PC-3 (cell line): ENCODE measurements at regions of chr15 and their contacts with region 1.

Region 1: DNA sequence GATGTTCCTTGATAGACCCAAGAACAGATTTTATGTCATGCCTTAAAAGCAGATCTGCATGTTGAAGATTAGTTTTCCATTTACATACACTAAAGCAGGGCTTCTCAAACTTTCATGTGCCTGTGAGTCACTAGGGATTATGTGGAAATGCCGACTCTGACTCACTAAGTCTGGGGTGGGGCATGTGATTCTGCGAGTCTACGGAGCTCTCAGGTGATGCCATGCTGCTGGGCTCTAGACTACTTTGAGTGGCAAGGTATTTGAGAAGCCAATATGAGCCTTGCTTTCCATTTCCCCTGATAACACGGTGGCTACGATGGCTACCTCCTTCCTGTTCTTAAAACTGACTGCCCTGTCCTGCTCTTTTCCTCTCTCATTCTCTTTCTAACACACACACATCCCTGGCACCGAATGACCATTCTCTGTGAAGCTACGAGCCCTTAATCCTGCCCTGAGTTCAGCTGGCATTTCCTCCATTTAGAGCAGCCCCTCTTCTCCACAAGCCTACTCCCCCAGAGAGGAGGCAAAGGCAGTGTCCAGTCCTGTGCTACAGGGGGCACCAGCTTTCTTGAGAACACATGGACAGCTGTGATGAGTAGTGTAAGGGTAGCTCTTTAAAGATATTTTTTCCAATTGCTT is 39.7 kb upstream of the PYGO1 start:
- DNase-seq: peak; percentile 91
- ATAC-seq: peak; percentile 100
- H3K4me3 ChIP-seq: no peak overlapping the region
- H3K27ac ChIP-seq: peak overlapping the region; percentile 52
- H3K4me1 ChIP-seq: peaks cover 7% of the 10 kb centered on the region; the same call in 1 of the 2 replicates
- H3K27me3 ChIP-seq: no peaks in the 10 kb centered on the region
- CTCF ChIP-seq: no peak

Region 2: DNA sequence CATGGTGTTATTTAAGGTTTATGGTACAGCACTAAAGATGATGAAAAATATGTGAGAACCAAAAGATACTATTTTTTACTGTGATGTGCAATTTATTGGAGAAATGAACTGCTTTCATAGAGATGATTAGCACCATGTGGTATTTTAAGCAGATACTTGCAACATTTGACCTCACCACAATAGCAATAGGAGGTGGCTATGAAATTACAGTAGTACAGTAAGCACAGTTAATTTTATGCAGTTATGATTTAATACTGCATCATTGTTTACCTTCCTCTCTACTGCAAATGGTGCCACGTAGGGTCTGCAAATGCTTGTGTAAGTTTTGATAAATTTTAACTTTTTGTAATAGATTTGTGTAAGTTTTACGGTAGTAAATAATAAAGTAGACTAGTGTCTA is 53.8 kb before region 1 on chr15:
- CTCF ChIA-PET with region 1: no interaction called
- POLR2A ChIA-PET with region 1: interaction called, 13 read pairs
- intact Hi-C with region 1: no loop called
- DNase-seq: peak; percentile 45
- ATAC-seq: peak; percentile 95
- H3K4me3 ChIP-seq: no peak overlapping the region
- H3K27ac ChIP-seq: peak overlapping the region; percentile 70
- H3K4me1 ChIP-seq: peaks cover 13% of the 10 kb centered on the region
- H3K27me3 ChIP-seq: no peaks in the 10 kb centered on the region
- CTCF ChIP-seq: no peak

Region 3: GRCh38 chr15:55588070-55588814 is 39.6 kb before region 1 on chr15 and contains the start of gene PYGO1:
- CTCF ChIA-PET with region 1: no interaction called
- POLR2A ChIA-PET with region 1: no interaction called
- intact Hi-C with region 1: loop called (anchors 5 kb)
- DNase-seq: peak; percentile 22
- ATAC-seq: peak; percentile 78
- H3K4me3 ChIP-seq: peak within 1 kb of the TSS; percentile 70
- H3K27ac ChIP-seq: no peak within 1 kb of the TSS
- H3K4me1 ChIP-seq: no peaks in the 10 kb centered on the region
- H3K27me3 ChIP-seq: peaks cover 34% of the 10 kb centered on the region
- CTCF ChIP-seq: no peak
- total RNA-seq, gene PYGO1: 1.8 and 2.0 TPM in 2 replicates

Region 4: GRCh38 chr15:55606214-55606613 is 21.6 kb before region 1 on chr15:
- CTCF ChIA-PET with region 1: no interaction called
- POLR2A ChIA-PET with region 1: no interaction called
- intact Hi-C with region 1: no loop called
- DNase-seq: no peak
- ATAC-seq: no peak
- H3K4me3 ChIP-seq: no peak overlapping the region
- H3K27ac ChIP-seq: no peak overlapping the region
- H3K4me1 ChIP-seq: no peaks in the 10 kb centered on the region
- H3K27me3 ChIP-seq: no peaks in the 10 kb centered on the region
- CTCF ChIP-seq: no peak

Region 5: GRCh38 chr15:55694652-55695150 is 66.9 kb after region 1 on chr15:
- CTCF ChIA-PET with region 1: no interaction called
- POLR2A ChIA-PET with region 1: no interaction called
- intact Hi-C with region 1: loop called (anchors 10 kb)
- DNase-seq: peak; percentile 57
- ATAC-seq: peak; percentile 94
- H3K4me3 ChIP-seq: no peak overlapping the region
- H3K27ac ChIP-seq: peak overlapping the region; percentile 23; the same call in 1 of the 2 replicates
- H3K4me1 ChIP-seq: peaks cover 11% of the 10 kb centered on the region
- H3K27me3 ChIP-seq: peaks cover 3% of the 10 kb centered on the region; the same call in 1 of the 2 replicates
- CTCF ChIP-seq: no peak

Region 6: GRCh38 chr15:55858661-55859060 is 230.8 kb after region 1 on chr15:
- CTCF ChIA-PET with region 1: no interaction called
- POLR2A ChIA-PET with region 1: no interaction called
- intact Hi-C with region 1: no loop called
- DNase-seq: no peak
- ATAC-seq: no peak
- H3K4me3 ChIP-seq: no peak overlapping the region
- H3K27ac ChIP-seq: no peak overlapping the region
- H3K4me1 ChIP-seq: no peaks in the 10 kb centered on the region
- H3K27me3 ChIP-seq: no peaks in the 10 kb centered on the region
- CTCF ChIP-seq: no peak